ENCODE measurements at regions of chr4 and their contacts with region 1.

Region 1: GRCh38 chr4:159435561-159436023 is 332.7 kb downstream of the RAPGEF2 start:
- DNase-seq: no peak
- ATAC-seq: no peak
- H3K4me3 ChIP-seq: no peak overlapping the region
- H3K27ac ChIP-seq: peak overlapping the region in 1 of 10 donors; percentile 25
- H3K4me1 ChIP-seq: peaks cover 0 to 14% (median 0%) of the 10 kb centered on the region in 9 donors
- H3K27me3 ChIP-seq: no peaks in the 10 kb centered on the region
- CTCF ChIP-seq: no peak

Region 2: DNA sequence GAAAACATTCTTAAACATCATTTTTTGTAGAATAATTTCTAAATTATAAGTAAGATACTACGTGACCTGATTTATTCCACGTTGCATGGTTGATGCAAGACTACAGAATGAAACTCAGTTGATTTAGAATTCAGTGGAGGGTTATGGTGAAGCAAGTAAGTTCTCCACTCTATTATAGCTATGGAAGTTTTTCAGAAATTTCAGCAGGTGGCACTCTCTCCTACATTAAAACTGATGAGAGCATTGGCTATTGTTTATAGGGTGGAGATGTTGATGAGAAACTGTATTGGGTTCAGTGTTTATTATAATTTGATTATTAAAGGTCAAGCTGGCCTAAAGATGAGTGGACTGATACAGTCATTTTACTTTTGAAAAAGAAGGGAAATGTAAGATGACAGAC is 578.7 kb before region 1 on chr4:
- intact Hi-C with region 1: loop called in 4 of 10 experiments (anchors 10 kb)
- DNase-seq: no peak
- ATAC-seq: peak in 7 of 8 donors; percentile 29 to 85 (median 76)
- H3K4me3 ChIP-seq: no peak overlapping the region
- H3K27ac ChIP-seq: no peak overlapping the region
- H3K4me1 ChIP-seq: peaks cover 0 to 18% (median 4%) of the 10 kb centered on the region in 9 donors
- H3K27me3 ChIP-seq: no peaks in the 10 kb centered on the region
- CTCF ChIP-seq: peak in 8 of 9 donors; percentile 23 to 75 (median 60)

Region 3: GRCh38 chr4:159206427-159206871 is 229.1 kb before region 1 on chr4:
- intact Hi-C with region 1: loop called in 3 of 10 experiments (anchors 10 kb)
- DNase-seq: no peak
- ATAC-seq: peak in 1 of 8 donors; percentile 30
- H3K4me3 ChIP-seq: no peak overlapping the region
- H3K27ac ChIP-seq: peak overlapping the region in 6 of 10 donors; percentile 7 to 36 (median 23)
- H3K4me1 ChIP-seq: peaks cover 8 to 89% (median 58%) of the 10 kb centered on the region in 9 donors
- H3K27me3 ChIP-seq: no peaks in the 10 kb centered on the region
- CTCF ChIP-seq: no peak

Region 4: GRCh38 chr4:159358226-159358625 is 77.4 kb before region 1 on chr4:
- intact Hi-C with region 1: loop called in 5 of 10 experiments (anchors 5 to 10 kb)
- DNase-seq: no peak
- ATAC-seq: peak in 2 of 8 donors; percentile 19 to 21
- H3K4me3 ChIP-seq: no peak overlapping the region
- H3K27ac ChIP-seq: peak overlapping the region in 7 of 10 donors; percentile 2 to 55 (median 15)
- H3K4me1 ChIP-seq: peaks cover 0 to 36% (median 5%) of the 10 kb centered on the region in 9 donors
- H3K27me3 ChIP-seq: no peaks in the 10 kb centered on the region
- CTCF ChIP-seq: no peak